ENCODE measurements at regions of chr10 and their contacts with region 1.

Region 1: GRCh38 chr10:2897619-2898508 is 169.5 kb upstream of the PFKP start:
- DNase-seq: no peak
- H3K4me3 ChIP-seq: no peak overlapping the region
- H3K27ac ChIP-seq: no peak overlapping the region
- H3K4me1 ChIP-seq: no peaks in the 10 kb centered on the region
- H3K27me3 ChIP-seq: no peaks in the 10 kb centered on the region
- CTCF ChIP-seq: no peak
- POLR2A ChIP-seq: no peak

Region 2: DNA sequence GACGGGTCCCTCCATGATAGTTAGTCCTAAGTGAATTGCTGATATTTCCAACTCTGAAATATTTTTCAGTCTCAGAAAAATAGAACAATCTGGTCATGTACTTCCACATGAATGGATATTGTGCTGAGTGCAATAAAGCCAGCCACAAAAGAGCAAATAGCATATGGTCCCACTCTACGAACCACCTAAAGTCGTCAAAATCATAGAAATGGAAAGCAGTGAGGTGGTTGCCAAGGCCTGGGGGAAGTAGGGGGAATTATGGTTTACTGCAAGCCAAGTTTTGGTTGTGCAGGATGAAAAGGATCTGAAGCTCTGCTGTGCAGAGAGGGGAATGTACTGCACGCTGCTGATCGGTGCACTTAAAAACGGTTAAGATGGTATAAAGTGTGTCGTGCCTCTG is 846.8 kb before region 1 on chr10:
- intact Hi-C with region 1: loop called (anchors 10 kb)
- DNase-seq: no peak
- H3K4me3 ChIP-seq: no peak overlapping the region
- H3K27ac ChIP-seq: no peak overlapping the region
- H3K4me1 ChIP-seq: no peaks in the 10 kb centered on the region
- H3K27me3 ChIP-seq: no peaks in the 10 kb centered on the region
- CTCF ChIP-seq: no peak
- POLR2A ChIP-seq: no peak

Measured in testis (tissue), 5 donors.